ENCODE measurements at regions of chr2 and their contacts with region 1.

Region 1: DNA sequence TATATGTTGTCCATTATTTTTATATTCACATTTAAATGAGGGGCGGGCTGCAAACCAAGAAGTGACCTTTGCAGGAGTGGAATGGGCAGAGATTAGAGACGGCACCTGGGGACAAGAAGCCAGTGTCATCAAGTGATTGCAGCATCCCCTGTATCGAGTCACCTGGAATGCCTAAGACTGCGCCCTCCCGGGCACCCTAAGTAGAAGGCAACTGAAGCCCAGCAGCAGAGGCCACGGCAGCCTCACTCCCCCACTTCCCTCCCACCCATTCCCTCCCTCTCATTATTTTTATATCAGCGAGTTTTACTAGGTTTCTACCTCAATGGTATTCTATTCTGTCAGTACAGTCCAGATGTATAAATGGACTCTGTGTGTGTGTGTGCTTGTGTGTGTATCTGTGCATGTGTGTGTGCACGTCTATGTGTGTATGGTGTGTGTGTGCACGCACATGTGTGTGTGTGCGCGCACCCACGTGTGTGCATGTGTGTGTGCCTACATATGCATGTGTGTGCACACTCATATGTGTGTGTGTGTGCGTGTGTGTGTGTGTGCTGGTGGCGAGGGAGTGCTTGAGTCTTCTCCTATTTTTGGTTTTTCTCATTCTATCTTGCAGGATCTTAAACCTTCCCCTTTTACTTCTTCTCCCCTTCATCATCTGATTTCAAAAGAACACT is 106.8 kb upstream of the SLC66A3 start:
- DNase-seq: no peak
- H3K4me3 ChIP-seq: no peak overlapping the region
- CTCF ChIP-seq: no peak

Region 2: DNA sequence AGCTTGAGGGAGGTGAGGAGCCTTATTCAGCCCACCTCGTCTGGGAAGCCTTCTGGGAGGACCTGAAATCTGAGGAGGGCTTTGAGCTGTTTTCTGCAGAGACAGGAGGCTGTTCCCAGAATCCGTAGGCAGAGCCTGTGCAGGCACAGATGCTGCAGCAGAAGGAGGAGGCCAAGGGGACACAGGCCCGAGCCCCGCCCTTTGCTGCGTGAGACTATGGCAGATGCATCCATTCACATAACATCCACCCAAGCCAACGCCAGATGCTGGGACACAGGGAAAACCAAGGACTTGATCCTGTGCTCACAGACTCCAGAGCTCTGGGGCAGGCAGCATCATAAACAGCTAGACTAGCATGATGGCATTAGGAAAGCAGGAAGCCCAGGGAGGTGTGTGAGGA is 38.6 kb before region 1 on chr2:
- in situ Hi-C with region 1: loop called (anchors 5 kb)
- DNase-seq: no peak
- H3K4me3 ChIP-seq: no peak overlapping the region
- CTCF ChIP-seq: no peak